Heart right ventricle (tissue), 16 donors: ENCODE measurements at regions of chr2 and their contacts with region 1.

Region 1: DNA sequence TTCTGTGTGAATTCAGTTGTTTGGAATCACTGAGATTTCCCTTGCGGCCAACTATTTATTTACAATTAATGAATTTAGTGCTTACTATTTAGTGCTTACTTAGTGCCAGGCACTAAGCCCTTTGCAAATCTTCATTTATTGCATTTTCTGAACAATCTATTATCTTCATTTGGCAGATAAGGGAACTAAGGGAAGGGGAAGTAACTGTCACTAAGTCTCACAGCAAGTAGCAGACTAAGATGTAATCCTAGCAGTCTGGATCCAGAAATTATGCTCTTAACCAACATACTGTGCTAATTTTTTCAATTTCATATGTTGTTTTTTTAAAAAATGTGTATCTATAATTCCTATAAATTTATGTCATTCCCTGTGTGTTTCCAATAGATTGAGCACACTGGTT is 214.4 kb upstream of the EPC2 start:
- DNase-seq: no peak
- ATAC-seq: no peak
- H3K4me3 ChIP-seq: no peak overlapping the region
- H3K27ac ChIP-seq: no peak overlapping the region
- H3K4me1 ChIP-seq: no peaks in the 10 kb centered on the region
- H3K27me3 ChIP-seq: no peaks in the 10 kb centered on the region
- CTCF ChIP-seq: no peak

Region 2: DNA sequence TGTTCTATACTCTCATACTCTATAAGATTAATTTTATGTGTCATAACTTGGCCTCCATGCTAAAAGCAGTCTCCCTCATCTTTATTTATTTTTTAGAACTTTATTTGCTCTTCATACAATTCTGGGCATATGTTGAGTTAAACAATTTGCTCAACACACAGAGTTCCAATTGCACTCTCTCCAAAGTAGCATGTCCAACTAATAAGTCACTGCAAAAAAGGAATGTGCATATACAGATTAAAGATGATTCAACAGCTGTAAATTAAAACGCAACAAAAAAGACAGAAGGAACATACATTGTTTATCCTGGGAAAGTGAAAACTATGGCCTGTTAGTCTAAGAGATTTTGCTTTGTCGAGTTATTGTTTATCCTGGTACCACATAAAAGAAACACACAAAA is 863.0 kb before region 1 on chr2:
- intact Hi-C with region 1: loop called in 1 of 10 experiments (anchors 5 kb)
- DNase-seq: no peak
- ATAC-seq: no peak
- H3K4me3 ChIP-seq: no peak overlapping the region
- H3K27ac ChIP-seq: no peak overlapping the region
- H3K4me1 ChIP-seq: no peaks in the 10 kb centered on the region
- H3K27me3 ChIP-seq: no peaks in the 10 kb centered on the region
- CTCF ChIP-seq: no peak

Region 3: GRCh38 chr2:148303161-148303560 is 126.9 kb before region 1 on chr2:
- intact Hi-C with region 1: no loop called
- DNase-seq: no peak
- ATAC-seq: no peak
- H3K4me3 ChIP-seq: no peak overlapping the region
- H3K27ac ChIP-seq: no peak overlapping the region
- H3K4me1 ChIP-seq: peaks cover 0 to 6% (median 0%) of the 10 kb centered on the region in 9 donors
- H3K27me3 ChIP-seq: no peaks in the 10 kb centered on the region
- CTCF ChIP-seq: no peak

Region 4: DNA sequence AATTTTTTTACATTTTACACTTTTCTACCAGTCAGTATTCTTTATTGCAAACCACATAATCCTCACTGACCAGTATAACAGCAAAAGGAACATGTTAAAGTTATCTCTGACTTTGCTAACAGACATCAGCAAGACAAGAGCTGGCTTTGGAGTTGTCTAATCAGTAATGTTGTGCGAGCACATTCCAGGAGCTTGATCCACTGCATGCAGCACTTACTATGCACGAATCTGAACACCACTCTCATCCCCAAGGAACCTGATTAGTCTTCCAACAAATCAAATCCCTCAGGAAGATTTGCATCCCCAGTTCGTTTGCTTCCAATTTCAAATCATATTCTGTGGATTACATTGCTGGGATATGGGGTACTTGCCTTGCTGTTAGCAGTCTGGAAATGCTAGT is 54.9 kb before region 1 on chr2:
- intact Hi-C with region 1: no loop called
- DNase-seq: no peak
- ATAC-seq: peak in 2 of 8 donors; percentile 29 to 53
- H3K4me3 ChIP-seq: no peak overlapping the region
- H3K27ac ChIP-seq: no peak overlapping the region
- H3K4me1 ChIP-seq: peaks cover 0 to 7% (median 0%) of the 10 kb centered on the region in 9 donors
- H3K27me3 ChIP-seq: no peaks in the 10 kb centered on the region
- CTCF ChIP-seq: no peak